Mucosa of descending colon (tissue), 3 donors: ENCODE measurements at regions of chr6 and their contacts with region 1.

Region 1: DNA sequence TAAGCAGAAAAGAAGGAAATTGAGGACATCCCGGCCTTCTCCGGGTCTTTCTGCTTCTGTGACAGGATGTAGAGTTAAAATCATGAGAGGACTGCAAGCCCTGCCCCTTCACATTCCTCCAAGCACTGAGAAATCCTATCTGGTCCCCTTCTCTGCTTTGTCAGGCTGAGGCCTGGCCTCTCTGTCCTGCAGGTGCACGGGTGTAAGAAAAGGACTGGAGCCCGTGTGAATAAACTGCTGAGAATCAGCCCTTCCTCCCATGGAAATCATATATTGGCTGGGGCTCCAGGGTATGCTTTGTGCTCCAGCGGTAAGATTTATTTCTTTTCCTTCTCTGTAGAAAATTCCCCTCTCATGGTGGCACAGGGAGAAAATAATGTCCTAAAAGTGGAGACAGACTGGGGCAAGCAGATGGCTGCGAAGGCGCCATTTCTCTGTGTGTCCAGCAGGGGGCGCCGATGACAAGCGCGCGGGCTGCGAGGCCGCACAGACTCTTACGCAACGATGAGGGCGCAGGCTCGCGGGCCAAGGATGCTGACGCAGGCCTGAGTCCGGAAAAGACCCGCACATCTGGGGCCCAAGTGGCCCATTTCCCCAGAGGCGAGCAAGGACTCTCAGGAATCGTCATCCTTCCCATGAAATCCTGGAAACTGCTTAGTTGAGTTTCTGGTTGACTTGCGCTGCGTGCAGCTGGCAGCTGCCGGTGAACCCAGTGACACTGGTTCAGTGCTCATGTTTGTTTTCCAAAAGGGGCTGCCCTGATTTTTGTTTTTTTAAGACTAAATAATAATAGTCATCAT is 258.6 kb downstream of the ADGB start:
- DNase-seq: peak; percentile 82 to 87 (median 85)
- ATAC-seq: peak; percentile 100
- H3K4me3 ChIP-seq: no peak overlapping the region
- H3K4me1 ChIP-seq: no peaks in the 10 kb centered on the region
- CTCF ChIP-seq: peak; percentile 96

Region 2: GRCh38 chr6:146240322-146240721 is 617.1 kb before region 1 on chr6:
- intact Hi-C with region 1: no loop called
- DNase-seq: no peak
- ATAC-seq: no peak
- H3K4me3 ChIP-seq: no peak overlapping the region
- H3K4me1 ChIP-seq: no peaks in the 10 kb centered on the region
- CTCF ChIP-seq: no peak

Region 3: DNA sequence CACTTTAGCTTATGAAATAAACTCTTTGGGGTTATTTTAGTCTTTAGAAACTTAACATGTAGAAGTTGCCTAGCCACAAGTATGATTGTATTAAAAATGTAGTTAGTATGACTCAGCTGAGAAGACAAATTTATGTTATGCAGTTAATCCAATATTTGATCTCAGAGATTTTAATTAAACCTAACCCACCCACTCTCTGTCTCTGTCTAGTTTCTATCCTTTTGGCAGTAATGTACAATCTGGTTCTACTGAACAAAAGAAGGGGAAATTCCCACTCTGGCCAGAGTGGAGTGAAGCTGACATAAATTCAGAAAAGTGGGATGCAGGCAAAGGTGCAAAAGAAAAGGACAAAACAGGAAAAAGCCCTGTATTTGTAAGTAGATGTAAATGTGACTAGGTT is 222.2 kb before region 1 on chr6:
- intact Hi-C with region 1: no loop called
- DNase-seq: no peak
- ATAC-seq: no peak
- H3K4me3 ChIP-seq: no peak overlapping the region
- H3K4me1 ChIP-seq: no peaks in the 10 kb centered on the region
- CTCF ChIP-seq: no peak

Region 4: GRCh38 chr6:147285087-147285855 is 427.9 kb after region 1 on chr6:
- intact Hi-C with region 1: loop called (anchors 10 kb)
- DNase-seq: no peak
- ATAC-seq: peak; percentile 39
- H3K4me3 ChIP-seq: no peak overlapping the region
- H3K4me1 ChIP-seq: peaks cover 22% of the 10 kb centered on the region
- CTCF ChIP-seq: no peak